ENCODE measurements at regions of chr4 and their contacts with region 1.

Region 1: GRCh38 chr4:74228691-74229640 is 71.0 kb downstream of the MTHFD2L start:
- DNase-seq: peak; percentile 78
- H3K4me3 Mint-ChIP-seq: no peak overlapping the region
- H3K27ac Mint-ChIP-seq: no peak overlapping the region
- H3K4me1 Mint-ChIP-seq: peaks cover 24% of the 10 kb centered on the region
- H3K27me3 Mint-ChIP-seq: no peaks in the 10 kb centered on the region

Region 2: GRCh38 chr4:74189331-74190043 is 39.5 kb before region 1 on chr4:
- CTCF ChIA-PET with region 1: interaction called, 16 read pairs
- POLR2A ChIA-PET with region 1: no interaction called
- DNase-seq: no peak
- H3K4me3 Mint-ChIP-seq: no peak overlapping the region
- H3K27ac Mint-ChIP-seq: no peak overlapping the region
- H3K4me1 Mint-ChIP-seq: no peaks in the 10 kb centered on the region
- H3K27me3 Mint-ChIP-seq: no peaks in the 10 kb centered on the region

Region 3: GRCh38 chr4:74308215-74308614 is 79.2 kb after region 1 on chr4 and contains the start of gene EPGN:
- CTCF ChIA-PET with region 1: interaction called, 44 read pairs
- POLR2A ChIA-PET with region 1: interaction called, 5 read pairs
- DNase-seq: no peak
- H3K4me3 Mint-ChIP-seq: peak within 1 kb of the TSS; percentile 6
- H3K27ac Mint-ChIP-seq: no peak within 1 kb of the TSS
- H3K4me1 Mint-ChIP-seq: peaks cover 8% of the 10 kb centered on the region
- H3K27me3 Mint-ChIP-seq: no peaks in the 10 kb centered on the region
- total RNA-seq, gene EPGN: 0.43 to 0.98 TPM